ENCODE measurements at regions of chr3 and their contacts with region 1.

Region 1: GRCh38 chr3:33440323-33441232 is at the start of gene UBP1:
- DNase-seq: peak; percentile 100
- ATAC-seq: peak; percentile 91 to 96 (median 92)
- H3K4me3 ChIP-seq: peak within 1 kb of the TSS; percentile 90
- H3K27ac ChIP-seq: peak within 1 kb of the TSS; percentile 92
- H3K4me1 ChIP-seq: peaks cover 40% of the 10 kb centered on the region
- H3K27me3 ChIP-seq: no peaks in the 10 kb centered on the region
- CTCF ChIP-seq: no peak
- total RNA-seq, gene UBP1: 22.4 to 26.6 (median 24.7) TPM

Region 2: GRCh38 chr3:33113772-33114621 is 326.6 kb before region 1 on chr3 and contains the start of gene CRTAP:
- intact Hi-C with region 1: loop called in 1 of 2 experiments (anchors 10 kb)
- DNase-seq: peak; percentile 97
- ATAC-seq: peak; percentile 90 to 94 (median 92)
- H3K4me3 ChIP-seq: peak within 1 kb of the TSS; percentile 89
- H3K27ac ChIP-seq: peak within 1 kb of the TSS; percentile 92
- H3K4me1 ChIP-seq: peaks cover 7% of the 10 kb centered on the region
- H3K27me3 ChIP-seq: no peaks in the 10 kb centered on the region
- CTCF ChIP-seq: no peak
- total RNA-seq, gene CRTAP: 56.3 to 80.8 (median 76.3) TPM

Region 3: GRCh38 chr3:33803894-33804526 is 363.4 kb after region 1 on chr3:
- intact Hi-C with region 1: loop called in 1 of 2 experiments (anchors 5 kb)
- DNase-seq: no peak
- ATAC-seq: no peak
- H3K4me3 ChIP-seq: no peak overlapping the region
- H3K27ac ChIP-seq: no peak overlapping the region
- H3K4me1 ChIP-seq: peaks cover 52% of the 10 kb centered on the region
- H3K27me3 ChIP-seq: no peaks in the 10 kb centered on the region
- CTCF ChIP-seq: no peak